ENCODE measurements at regions of chr9 and their contacts with region 1.

Region 1: DNA sequence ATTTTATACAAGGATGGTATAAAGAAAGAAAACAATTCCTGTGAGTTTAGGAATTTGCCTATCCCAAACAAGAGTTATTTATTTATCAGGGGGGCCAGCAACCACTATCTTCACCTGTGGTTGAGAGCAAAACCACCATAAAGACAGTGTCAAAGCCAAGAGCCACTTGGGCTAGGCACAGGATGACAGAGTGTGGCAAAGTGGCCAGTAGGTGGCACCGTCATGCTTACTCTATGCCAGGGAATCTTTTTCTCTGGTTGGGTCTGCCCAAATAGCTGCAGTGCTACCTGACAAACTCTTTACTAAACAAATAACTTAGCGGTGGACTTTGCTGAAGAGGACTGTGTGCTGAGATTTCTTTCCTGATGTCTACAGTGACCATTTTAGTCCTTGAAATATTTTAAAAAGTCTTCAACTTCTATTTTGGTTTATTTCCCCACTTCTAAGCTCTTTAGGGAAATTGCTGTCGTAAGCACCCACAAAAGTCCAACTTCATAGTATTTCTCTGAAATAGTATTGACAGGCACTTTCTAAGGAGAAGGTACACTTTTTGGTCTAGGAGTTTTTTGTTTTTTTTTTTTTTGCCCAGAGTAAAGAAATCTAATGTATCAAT is 285.0 kb downstream of the RFX3 start:
- DNase-seq: peak; percentile 23 to 74
- ATAC-seq: peak; percentile 78 to 95 (median 86)
- H3K4me3 ChIP-seq: no peak overlapping the region
- H3K4me3 Mint-ChIP-seq: no peak overlapping the region
- H3K27ac ChIP-seq: no peak overlapping the region
- H3K27ac Mint-ChIP-seq: no peak overlapping the region
- H3K4me1 ChIP-seq: peaks cover 4% of the 10 kb centered on the region
- H3K4me1 Mint-ChIP-seq: peaks cover 6 to 9% of the 10 kb centered on the region in 2 donors
- H3K27me3 ChIP-seq: no peaks in the 10 kb centered on the region
- H3K27me3 Mint-ChIP-seq: no peaks in the 10 kb centered on the region
- CTCF ChIP-seq: peak; percentile 76

Region 2: DNA sequence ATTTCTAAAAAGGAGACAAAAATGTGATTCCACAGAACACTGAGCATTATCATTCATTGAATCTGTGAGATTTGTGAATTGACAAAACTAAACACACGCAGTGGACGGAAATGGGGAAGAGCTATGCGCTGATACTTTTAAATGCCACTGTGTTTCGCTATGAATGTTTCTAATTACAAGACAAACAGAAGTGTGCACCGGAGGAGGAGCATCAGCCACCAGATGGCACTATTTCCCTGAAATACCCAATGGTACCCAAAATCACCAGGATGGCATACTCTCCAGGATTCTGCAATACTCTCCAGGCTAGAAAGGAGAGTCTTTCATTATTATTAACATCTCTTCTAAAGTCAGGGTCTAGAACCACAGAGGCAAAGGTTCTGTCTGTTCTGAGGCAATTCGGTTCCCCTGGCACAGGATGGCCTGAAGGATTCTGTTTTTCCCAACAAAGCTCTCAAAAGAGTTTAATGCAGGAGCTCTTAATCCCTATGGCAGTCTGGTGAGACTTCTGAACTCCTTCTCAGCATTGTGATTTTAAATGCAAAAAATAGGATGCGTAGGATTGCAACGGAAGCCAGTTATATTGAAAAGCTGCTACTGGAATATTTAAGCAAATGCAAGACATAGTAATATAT is 383.1 kb before region 1 on chr9:
- intact Hi-C with region 1: loop called (anchors 2 kb)
- DNase-seq: peak in 1 of 2 donors; percentile 82
- ATAC-seq: peak; percentile 73 to 83 (median 80)
- H3K4me3 ChIP-seq: no peak overlapping the region
- H3K4me3 Mint-ChIP-seq: no peak overlapping the region
- H3K27ac ChIP-seq: no peak overlapping the region
- H3K27ac Mint-ChIP-seq: no peak overlapping the region
- H3K4me1 ChIP-seq: no peaks in the 10 kb centered on the region
- H3K4me1 Mint-ChIP-seq: peaks cover 0 to 4% of the 10 kb centered on the region in 2 donors
- H3K27me3 ChIP-seq: peaks cover 3% of the 10 kb centered on the region
- H3K27me3 Mint-ChIP-seq: peaks cover 20 to 41% of the 10 kb centered on the region in 2 donors
- CTCF ChIP-seq: peak; percentile 91

Region 3: GRCh38 chr9:3088166-3088702 is 152.5 kb before region 1 on chr9:
- intact Hi-C with region 1: no loop called
- DNase-seq: no peak
- ATAC-seq: no peak
- H3K4me3 ChIP-seq: no peak overlapping the region
- H3K4me3 Mint-ChIP-seq: no peak overlapping the region
- H3K27ac ChIP-seq: no peak overlapping the region
- H3K27ac Mint-ChIP-seq: no peak overlapping the region
- H3K4me1 ChIP-seq: no peaks in the 10 kb centered on the region
- H3K4me1 Mint-ChIP-seq: no peaks in the 10 kb centered on the region
- H3K27me3 ChIP-seq: no peaks in the 10 kb centered on the region
- H3K27me3 Mint-ChIP-seq: peaks cover 0 to 4% of the 10 kb centered on the region in 2 donors
- CTCF ChIP-seq: no peak

Region 4: DNA sequence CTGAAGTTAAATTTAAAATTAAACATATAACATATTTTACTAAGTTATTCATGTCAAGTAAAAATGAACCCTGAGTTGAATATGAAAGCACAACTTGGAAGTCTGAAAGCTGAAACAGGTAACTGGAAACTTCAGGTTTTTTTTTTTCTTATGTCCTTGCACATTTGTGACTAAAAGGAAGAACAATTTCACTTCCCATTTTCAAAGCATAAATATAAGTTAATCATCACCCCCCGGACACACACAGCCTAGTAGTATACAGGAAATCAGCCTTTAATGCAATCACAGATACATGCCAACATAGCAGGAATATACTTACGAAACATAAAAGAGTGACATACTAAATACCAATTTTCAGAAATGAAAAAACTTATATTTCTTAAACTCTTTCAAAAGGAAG is 59.1 kb after region 1 on chr9:
- intact Hi-C with region 1: no loop called
- DNase-seq: no peak
- ATAC-seq: no peak
- H3K4me3 ChIP-seq: no peak overlapping the region
- H3K4me3 Mint-ChIP-seq: no peak overlapping the region
- H3K27ac ChIP-seq: no peak overlapping the region
- H3K27ac Mint-ChIP-seq: no peak overlapping the region
- H3K4me1 ChIP-seq: no peaks in the 10 kb centered on the region
- H3K4me1 Mint-ChIP-seq: no peaks in the 10 kb centered on the region
- H3K27me3 ChIP-seq: no peaks in the 10 kb centered on the region
- H3K27me3 Mint-ChIP-seq: no peaks in the 10 kb centered on the region
- CTCF ChIP-seq: no peak

Region 5: GRCh38 chr9:3441197-3441816 is 200.5 kb after region 1 on chr9:
- intact Hi-C with region 1: loop called (anchors 2 kb)
- DNase-seq: peak in 1 of 2 donors; percentile 72
- ATAC-seq: peak; percentile 79 to 94 (median 93)
- H3K4me3 ChIP-seq: no peak overlapping the region
- H3K4me3 Mint-ChIP-seq: no peak overlapping the region
- H3K27ac ChIP-seq: no peak overlapping the region
- H3K27ac Mint-ChIP-seq: no peak overlapping the region
- H3K4me1 ChIP-seq: no peaks in the 10 kb centered on the region
- H3K4me1 Mint-ChIP-seq: peaks cover 12% of the 10 kb centered on the region in 2 donors
- H3K27me3 ChIP-seq: no peaks in the 10 kb centered on the region
- H3K27me3 Mint-ChIP-seq: no peaks in the 10 kb centered on the region
- CTCF ChIP-seq: peak; percentile 65

Region 6: GRCh38 chr9:4117835-4118610 is 877.3 kb after region 1 on chr9:
- intact Hi-C with region 1: loop called (anchors 2 kb)
- DNase-seq: peak; percentile 34 to 56
- ATAC-seq: peak; percentile 44 to 72 (median 57)
- H3K4me3 ChIP-seq: no peak overlapping the region
- H3K4me3 Mint-ChIP-seq: no peak overlapping the region
- H3K27ac ChIP-seq: no peak overlapping the region
- H3K27ac Mint-ChIP-seq: no peak overlapping the region
- H3K4me1 ChIP-seq: no peaks in the 10 kb centered on the region
- H3K4me1 Mint-ChIP-seq: no peaks in the 10 kb centered on the region
- H3K27me3 ChIP-seq: no peaks in the 10 kb centered on the region
- H3K27me3 Mint-ChIP-seq: no peaks in the 10 kb centered on the region
- CTCF ChIP-seq: peak; percentile 36

Region 7: DNA sequence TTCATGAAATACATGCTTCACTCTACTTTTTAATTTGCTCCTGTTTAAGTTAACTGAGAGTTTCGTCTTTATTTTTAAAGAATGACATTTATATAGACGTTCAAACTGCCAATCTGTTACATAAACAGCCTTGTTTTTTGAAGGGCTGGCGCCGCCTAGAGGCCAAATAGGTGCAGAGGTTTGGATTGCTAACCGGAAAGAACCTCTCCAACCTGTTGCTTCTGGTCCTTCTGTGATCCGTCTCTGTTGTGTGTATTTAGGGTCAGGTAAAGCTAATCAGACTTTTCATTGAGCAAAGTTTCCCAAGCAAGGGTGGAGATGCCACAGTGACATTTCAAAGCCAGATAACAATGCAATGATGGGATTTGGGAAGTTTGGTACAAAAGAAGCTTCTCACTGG is 1098.6 kb after region 1 on chr9:
- intact Hi-C with region 1: loop called (anchors 2 kb)
- DNase-seq: peak; percentile 56 to 86
- ATAC-seq: peak; percentile 72 to 84 (median 72)
- H3K4me3 ChIP-seq: no peak overlapping the region
- H3K4me3 Mint-ChIP-seq: peak overlapping the region; percentile 10
- H3K27ac ChIP-seq: no peak overlapping the region
- H3K27ac Mint-ChIP-seq: peak overlapping the region in 1 of 2 donors; percentile 47
- H3K4me1 ChIP-seq: no peaks in the 10 kb centered on the region
- H3K4me1 Mint-ChIP-seq: peaks cover 5% of the 10 kb centered on the region in 2 donors
- H3K27me3 ChIP-seq: no peaks in the 10 kb centered on the region
- H3K27me3 Mint-ChIP-seq: peaks cover 6 to 12% of the 10 kb centered on the region in 2 donors
- CTCF ChIP-seq: peak; percentile 72

Measured in natural killer cell (primary cell).